Activated CD4-positive, alpha-beta T cell treated with anti-CD3 and anti-CD28 coated beads for 36 hours (primary cell): ENCODE measurements at regions of chr16 and their contacts with region 1.

Region 1: GRCh38 chr16:68085259-68086071 is at the start of gene NFATC3:
- DNase-seq: peak; percentile 100
- ATAC-seq: peak; percentile 62
- H3K4me3 Mint-ChIP-seq: peak within 1 kb of the TSS; percentile 89
- H3K27ac Mint-ChIP-seq: peak within 1 kb of the TSS; percentile 94
- H3K4me1 Mint-ChIP-seq: peaks cover 64% of the 10 kb centered on the region
- H3K27me3 Mint-ChIP-seq: no peaks in the 10 kb centered on the region
- total RNA-seq, gene NFATC3: 68.4 to 81.2 TPM

Region 2: DNA sequence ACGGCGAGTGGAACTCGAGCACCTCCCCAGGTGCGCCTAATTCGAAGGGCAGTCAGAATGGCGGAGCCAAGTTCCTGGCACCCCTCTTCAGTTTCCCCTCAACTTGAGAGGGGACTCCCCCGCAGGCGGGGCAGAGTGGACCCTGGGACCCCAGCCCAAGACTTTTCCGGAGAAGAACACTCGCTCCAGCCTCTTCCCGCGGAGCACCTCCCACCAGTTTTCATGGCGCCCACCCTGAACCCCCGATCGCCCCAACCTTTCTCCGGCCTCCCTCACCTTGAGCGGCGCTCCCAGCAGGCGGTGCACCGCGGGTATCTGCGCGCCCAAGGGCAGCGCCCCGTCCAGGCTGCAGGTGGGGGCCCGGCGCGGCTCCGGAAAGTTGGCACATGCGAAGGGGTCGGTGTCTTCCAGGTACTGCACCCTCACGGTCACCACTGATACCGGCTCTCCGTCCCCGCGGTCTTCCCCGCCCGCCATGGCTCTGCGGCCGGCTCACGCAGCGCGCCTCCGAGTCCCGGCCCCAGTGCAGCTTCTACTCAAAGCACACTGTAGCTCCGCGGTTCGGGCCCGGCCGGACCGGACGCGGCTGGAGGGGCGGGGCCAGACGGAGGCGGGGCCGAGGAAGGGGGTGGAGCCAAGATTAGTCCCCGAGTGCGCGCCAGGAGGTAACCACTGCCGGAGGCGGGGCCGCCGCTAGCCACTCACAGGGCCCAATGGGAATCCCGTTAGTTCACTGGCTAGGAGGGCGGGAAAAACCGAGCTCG is 838.3 kb before region 1 on chr16 and contains the start of gene FHOD1:
- CTCF ChIA-PET with region 1: no interaction called
- POLR2A ChIA-PET with region 1: no interaction called
- intact Hi-C with region 1: loop called in 1 of 2 experiments (anchors 2 kb)
- DNase-seq: peak; percentile 99
- ATAC-seq: peak; percentile 74
- H3K4me3 Mint-ChIP-seq: peak within 1 kb of the TSS; percentile 87
- H3K27ac Mint-ChIP-seq: peak within 1 kb of the TSS; percentile 85
- H3K4me1 Mint-ChIP-seq: peaks cover 52% of the 10 kb centered on the region
- H3K27me3 Mint-ChIP-seq: peaks cover 11% of the 10 kb centered on the region
- total RNA-seq, gene FHOD1: 75.5 to 77.2 TPM

Region 3: GRCh38 chr16:67841764-67842508 is 243.5 kb before region 1 on chr16 and contains the start of gene THAP11:
- CTCF ChIA-PET with region 1: interaction called, 4 read pairs
- POLR2A ChIA-PET with region 1: interaction called, 4 read pairs
- intact Hi-C with region 1: loop called in 1 of 2 experiments (anchors 1 kb)
- DNase-seq: peak; percentile 97
- ATAC-seq: peak; percentile 55
- H3K4me3 Mint-ChIP-seq: peak within 1 kb of the TSS; percentile 94
- H3K27ac Mint-ChIP-seq: peak within 1 kb of the TSS; percentile 97
- H3K4me1 Mint-ChIP-seq: peaks cover 33% of the 10 kb centered on the region
- H3K27me3 Mint-ChIP-seq: no peaks in the 10 kb centered on the region
- total RNA-seq, gene THAP11: 31.8 to 34.5 TPM

Region 4: DNA sequence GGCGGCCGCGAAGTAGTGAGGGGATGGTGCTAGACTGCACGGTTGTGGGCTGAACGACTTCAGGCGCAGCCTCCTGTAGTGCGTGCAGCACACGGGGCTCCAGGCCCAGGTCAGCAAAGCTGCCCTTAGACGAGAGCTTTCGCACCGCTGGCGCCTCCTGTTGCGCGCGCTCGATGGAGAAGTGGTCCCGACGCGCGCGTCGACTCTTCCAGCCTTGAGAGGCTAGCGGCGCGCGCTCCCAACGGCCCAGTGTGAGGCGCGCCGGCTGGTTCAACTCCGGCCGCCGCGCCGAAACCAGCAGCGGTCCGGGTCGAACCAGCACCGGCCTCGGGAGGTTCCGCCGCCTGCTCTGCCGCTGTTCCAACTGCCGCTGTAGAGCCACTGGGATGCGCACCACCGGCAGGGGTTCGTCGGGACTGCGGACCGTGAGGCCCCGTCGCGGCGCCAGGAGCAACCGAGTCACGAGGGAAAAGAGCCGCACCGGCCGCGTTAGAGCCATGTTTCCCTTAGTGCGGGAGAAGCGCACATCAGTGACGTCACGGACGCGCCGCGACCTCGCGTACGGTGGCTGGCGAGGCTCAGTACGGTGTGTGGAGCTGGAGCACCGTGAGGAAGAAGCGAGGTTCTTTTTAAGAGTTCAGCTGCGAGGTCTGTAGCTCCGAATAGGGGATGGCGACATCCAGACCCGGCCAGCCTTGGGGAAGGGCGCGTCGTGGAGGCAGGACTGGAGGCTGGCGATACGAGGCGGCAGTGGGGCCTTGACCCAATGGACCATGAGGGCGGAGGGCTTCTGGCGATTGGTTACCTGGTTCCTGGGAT is 62.6 kb before region 1 on chr16 and contains the starts of genes DDX28 and DUS2:
- CTCF ChIA-PET with region 1: interaction called, 4 read pairs
- POLR2A ChIA-PET with region 1: no interaction called
- intact Hi-C with region 1: loop called in 1 of 2 experiments (anchors 1 kb)
- DNase-seq: peak; percentile 95
- ATAC-seq: peak; percentile 89
- H3K4me3 Mint-ChIP-seq: peak within 1 kb of the TSS; percentile 95
- H3K27ac Mint-ChIP-seq: peak within 1 kb of the TSS; percentile 97
- H3K4me1 Mint-ChIP-seq: peaks cover 23% of the 10 kb centered on the region
- H3K27me3 Mint-ChIP-seq: no peaks in the 10 kb centered on the region
- total RNA-seq, gene DDX28: 13.7 to 17.1 TPM
- total RNA-seq, gene DUS2: 29.5 to 33.1 TPM

Region 5: DNA sequence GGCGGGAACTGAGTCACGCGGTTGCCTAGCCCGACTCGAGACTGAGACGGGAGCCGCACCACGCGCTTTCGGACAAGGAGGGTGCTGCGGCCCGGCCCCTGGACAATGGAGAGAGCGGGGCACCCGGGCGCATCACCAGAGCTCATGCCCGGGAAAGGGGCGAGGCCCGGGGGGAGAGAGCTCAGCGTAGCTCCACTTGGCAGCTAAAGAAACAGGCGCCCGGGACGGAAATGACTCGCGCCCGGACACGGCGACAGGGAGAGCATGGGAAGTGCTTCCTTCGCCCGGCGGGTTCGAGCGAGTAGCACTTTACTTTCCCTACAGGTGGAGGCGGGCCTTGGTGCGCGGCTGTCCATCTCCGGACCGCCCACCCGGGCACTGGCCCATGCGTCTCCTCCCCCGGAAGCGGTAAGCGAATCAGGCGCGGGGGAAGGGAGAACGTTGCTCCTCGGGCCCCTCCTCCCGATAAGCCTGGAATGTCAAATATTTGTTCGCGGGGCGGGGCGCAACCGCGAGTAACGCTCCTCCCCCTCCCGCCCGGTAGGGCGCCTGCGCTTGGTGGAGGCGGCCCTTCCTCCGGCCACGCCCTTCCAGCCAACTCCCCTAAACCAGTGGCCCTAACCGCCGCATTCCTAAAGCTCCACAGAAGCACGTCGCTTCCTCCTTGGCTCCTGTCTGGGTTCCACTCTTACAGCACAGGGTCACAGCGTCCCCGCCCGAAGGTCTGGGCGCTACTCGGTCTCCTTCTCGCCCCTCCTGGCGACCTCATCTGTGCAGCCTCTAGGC is 152.0 kb after region 1 on chr16:
- CTCF ChIA-PET with region 1: no interaction called
- POLR2A ChIA-PET with region 1: no interaction called
- intact Hi-C with region 1: loop called in 1 of 2 experiments (anchors 1 kb)
- DNase-seq: peak; percentile 96
- ATAC-seq: peak; percentile 79
- H3K4me3 Mint-ChIP-seq: peak overlapping the region; percentile 83
- H3K27ac Mint-ChIP-seq: peak overlapping the region; percentile 86
- H3K4me1 Mint-ChIP-seq: peaks cover 40% of the 10 kb centered on the region
- H3K27me3 Mint-ChIP-seq: no peaks in the 10 kb centered on the region

Region 6: DNA sequence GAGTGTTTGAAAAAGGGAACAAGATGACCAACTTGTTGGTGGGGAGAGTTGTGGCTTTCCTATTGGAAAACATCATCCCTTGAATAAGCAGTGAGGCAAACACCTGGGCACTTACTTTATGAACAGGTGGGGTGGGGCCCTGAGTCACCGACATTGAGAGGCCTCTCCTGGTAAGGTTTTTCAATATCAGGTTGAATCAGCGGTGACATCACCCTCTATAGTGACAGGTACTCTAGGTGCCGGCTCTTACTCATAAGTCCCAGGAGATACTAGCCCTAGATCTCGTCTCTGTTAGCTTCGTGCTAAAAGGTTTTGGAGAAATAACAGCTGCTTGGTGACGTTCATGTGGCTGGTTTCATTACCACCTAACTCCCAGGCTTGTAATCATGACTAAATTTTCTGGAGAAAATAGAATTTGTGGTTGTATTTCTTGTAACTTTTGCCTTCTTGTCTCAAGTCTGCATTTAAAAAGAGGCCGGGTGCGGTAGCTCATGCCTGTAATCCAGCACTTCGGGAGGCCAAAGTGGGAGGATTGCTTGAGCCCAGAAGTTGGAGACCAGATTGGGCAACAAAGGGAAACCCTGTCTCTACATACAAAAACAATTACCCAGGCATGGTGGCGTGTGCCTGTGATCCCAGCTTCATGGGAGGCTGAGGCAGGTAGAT is 670.9 kb after region 1 on chr16:
- CTCF ChIA-PET with region 1: no interaction called
- POLR2A ChIA-PET with region 1: no interaction called
- intact Hi-C with region 1: loop called in 1 of 2 experiments (anchors 5 kb)
- DNase-seq: peak; percentile 90
- ATAC-seq: peak; percentile 69
- H3K4me3 Mint-ChIP-seq: peak overlapping the region; percentile 52
- H3K27ac Mint-ChIP-seq: peak overlapping the region; percentile 97
- H3K4me1 Mint-ChIP-seq: peaks cover 66% of the 10 kb centered on the region
- H3K27me3 Mint-ChIP-seq: no peaks in the 10 kb centered on the region